ENCODE measurements at regions of chr5 and their contacts with region 1.

Region 1: GRCh38 chr5:145072889-145073288 is 762.3 kb downstream of the PRELID2 start:
- DNase-seq: no peak
- ATAC-seq: no peak
- H3K4me3 ChIP-seq: no peak overlapping the region
- H3K27ac ChIP-seq: no peak overlapping the region
- H3K4me1 ChIP-seq: no peaks in the 10 kb centered on the region
- H3K27me3 ChIP-seq: no peaks in the 10 kb centered on the region
- CTCF ChIP-seq: no peak
- POLR2A ChIP-seq: no peak
- RAD21 ChIP-seq: no peak

Region 2: DNA sequence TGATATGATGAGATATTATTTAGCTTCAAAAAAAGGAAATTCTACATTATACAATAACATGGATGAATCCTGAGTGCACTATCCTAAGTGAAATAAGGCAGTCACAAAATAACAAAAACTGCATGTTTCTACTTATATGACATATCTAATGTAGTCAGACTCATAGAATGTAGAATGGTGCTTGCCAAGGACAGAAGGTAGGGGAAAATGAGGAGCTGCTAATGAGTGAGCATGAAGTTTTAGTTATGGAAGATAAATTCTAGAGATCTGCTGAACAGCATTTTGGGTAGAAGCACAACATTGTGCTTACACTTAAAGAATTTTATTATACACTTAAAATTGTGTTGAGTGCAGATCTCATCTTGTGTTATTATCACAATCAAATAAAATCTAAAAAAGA is 89.8 kb before region 1 on chr5:
- CTCF ChIA-PET with region 1: no interaction called
- POLR2A ChIA-PET with region 1: no interaction called
- dilution Hi-C with region 1: no loop called
- in situ Hi-C with region 1: no loop called
- intact Hi-C with region 1: no loop called
- DNase-seq: no peak
- ATAC-seq: no peak
- H3K4me3 ChIP-seq: no peak overlapping the region
- H3K27ac ChIP-seq: no peak overlapping the region
- H3K4me1 ChIP-seq: no peaks in the 10 kb centered on the region
- H3K27me3 ChIP-seq: no peaks in the 10 kb centered on the region
- CTCF ChIP-seq: no peak
- POLR2A ChIP-seq: no peak
- RAD21 ChIP-seq: no peak

Region 3: DNA sequence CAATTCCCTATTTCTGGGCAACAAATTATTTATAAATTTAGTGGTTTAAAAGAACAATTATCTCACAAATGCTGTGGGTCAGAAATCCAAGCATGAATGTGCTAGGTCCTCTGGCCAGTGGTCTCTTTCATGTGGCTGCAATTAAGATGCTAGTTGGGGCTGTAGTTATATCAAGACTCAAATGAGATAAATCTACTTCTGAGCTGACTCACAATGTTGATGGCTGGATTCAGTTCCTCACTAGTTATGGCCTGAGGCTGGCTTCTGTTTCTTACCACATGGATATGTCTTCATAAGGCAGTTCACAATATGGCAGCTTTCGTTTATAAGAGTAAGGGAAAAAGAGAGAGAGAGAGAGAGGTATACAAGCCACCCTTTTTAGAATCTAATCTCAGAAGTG is 45.2 kb after region 1 on chr5:
- CTCF ChIA-PET with region 1: no interaction called
- POLR2A ChIA-PET with region 1: no interaction called
- dilution Hi-C with region 1: no loop called
- in situ Hi-C with region 1: no loop called
- intact Hi-C with region 1: loop called (anchors 1 kb)
- DNase-seq: no peak
- ATAC-seq: no peak
- H3K4me3 ChIP-seq: no peak overlapping the region
- H3K27ac ChIP-seq: no peak overlapping the region
- H3K4me1 ChIP-seq: no peaks in the 10 kb centered on the region
- H3K27me3 ChIP-seq: no peaks in the 10 kb centered on the region
- CTCF ChIP-seq: no peak
- POLR2A ChIP-seq: no peak
- RAD21 ChIP-seq: no peak

Region 4: GRCh38 chr5:145484158-145484557 is 411.3 kb after region 1 on chr5:
- CTCF ChIA-PET with region 1: no interaction called
- POLR2A ChIA-PET with region 1: no interaction called
- dilution Hi-C with region 1: no loop called
- in situ Hi-C with region 1: no loop called
- intact Hi-C with region 1: no loop called
- DNase-seq: peak; percentile 92
- ATAC-seq: peak; percentile 74
- H3K4me3 ChIP-seq: no peak overlapping the region
- H3K27ac ChIP-seq: no peak overlapping the region
- H3K4me1 ChIP-seq: peaks cover 8% of the 10 kb centered on the region
- H3K27me3 ChIP-seq: no peaks in the 10 kb centered on the region
- CTCF ChIP-seq: no peak
- POLR2A ChIP-seq: no peak
- RAD21 ChIP-seq: no peak

Region 5: GRCh38 chr5:145510324-145510723 is 437.4 kb after region 1 on chr5:
- CTCF ChIA-PET with region 1: no interaction called
- POLR2A ChIA-PET with region 1: no interaction called
- dilution Hi-C with region 1: no loop called
- in situ Hi-C with region 1: no loop called
- intact Hi-C with region 1: no loop called
- DNase-seq: peak; percentile 71
- ATAC-seq: peak; percentile 47
- H3K4me3 ChIP-seq: no peak overlapping the region
- H3K27ac ChIP-seq: no peak overlapping the region
- H3K4me1 ChIP-seq: peaks cover 12% of the 10 kb centered on the region
- H3K27me3 ChIP-seq: no peaks in the 10 kb centered on the region
- CTCF ChIP-seq: no peak
- POLR2A ChIP-seq: no peak
- RAD21 ChIP-seq: no peak

Measured in IMR-90 (cell line).